PC-9 (cell line): ENCODE measurements at regions of chr10 and their contacts with region 1.

Region 1: DNA sequence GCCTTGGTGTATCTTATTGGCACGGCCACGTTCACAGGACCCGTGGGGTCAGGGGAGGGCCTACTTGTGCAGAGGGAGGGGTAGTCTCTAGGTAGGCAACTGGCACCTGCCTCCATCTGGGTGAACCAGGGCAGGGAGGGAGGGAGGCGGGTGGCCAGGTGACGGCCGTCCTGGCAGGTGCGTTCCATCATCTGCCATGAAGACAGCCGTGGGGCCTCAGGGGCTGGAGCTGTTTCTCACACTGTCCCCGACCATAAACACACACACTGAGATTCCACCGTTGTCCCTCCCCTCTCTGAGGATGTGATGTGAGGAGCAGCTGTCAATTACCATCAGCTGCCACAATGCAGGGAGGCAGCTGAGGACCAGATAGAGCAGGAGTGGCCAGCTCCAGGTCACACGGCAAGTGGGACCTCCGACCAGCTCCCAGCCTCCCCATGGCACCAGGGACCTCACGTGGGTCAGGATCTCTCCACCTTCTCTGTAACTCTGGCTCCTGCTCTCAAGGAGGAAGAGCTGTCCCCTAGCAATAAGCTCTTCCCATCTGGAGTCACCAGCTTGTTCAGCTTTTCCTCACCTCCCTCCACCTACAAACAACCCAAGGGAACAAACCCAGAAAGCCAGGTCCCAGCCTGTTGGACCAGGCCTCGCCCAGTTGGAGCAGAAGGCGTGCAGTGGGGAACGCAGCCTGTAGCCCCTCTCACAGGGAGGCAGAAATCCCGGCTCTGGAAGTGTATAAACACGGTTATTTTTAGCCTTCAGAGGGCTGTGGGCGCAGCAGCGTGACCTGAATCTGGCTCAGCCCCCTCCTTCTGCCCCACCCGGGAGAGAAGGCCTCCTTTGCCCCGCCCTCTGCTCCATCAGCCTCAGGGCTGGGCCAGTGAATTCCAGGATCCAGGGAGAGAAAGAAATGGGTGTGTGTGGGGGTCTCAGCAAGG is 33.1 kb downstream of the ZMIZ1 start:
- DNase-seq: no peak
- H3K4me3 ChIP-seq: no peak overlapping the region
- H3K27ac ChIP-seq: no peak overlapping the region
- H3K4me1 ChIP-seq: no peaks in the 10 kb centered on the region; the same call in 1 of the 2 replicates
- H3K27me3 ChIP-seq: no peaks in the 10 kb centered on the region
- CTCF ChIP-seq: no peak

Region 2: DNA sequence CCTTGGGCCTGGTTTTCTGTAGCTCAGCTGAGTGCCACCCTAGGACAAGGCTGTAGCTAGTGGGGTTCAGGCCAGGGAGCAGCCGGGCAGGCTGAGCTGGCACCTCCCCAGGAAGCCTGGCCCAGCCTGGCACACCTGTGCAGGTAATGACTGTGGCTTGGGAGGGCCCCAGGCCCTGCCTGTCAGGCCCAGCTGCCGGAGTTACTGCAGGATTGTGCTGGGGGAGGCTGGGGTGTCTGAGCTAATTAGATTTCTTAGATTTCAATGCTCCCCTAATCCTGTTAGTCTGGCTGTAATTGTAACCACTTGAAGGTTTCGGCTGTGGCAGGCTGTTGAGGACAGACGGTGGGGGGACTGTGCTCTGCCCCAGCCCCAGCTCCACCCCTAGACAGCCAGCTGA is 27.1 kb before region 1 on chr10:
- CTCF ChIA-PET with region 1: no interaction called
- POLR2A ChIA-PET with region 1: interaction called, 22 read pairs
- intact Hi-C with region 1: no loop called
- DNase-seq: peak in 1 of 2 experiments; percentile 67
- H3K4me3 ChIP-seq: no peak overlapping the region
- H3K27ac ChIP-seq: no peak overlapping the region
- H3K4me1 ChIP-seq: peaks cover 82% of the 10 kb centered on the region
- H3K27me3 ChIP-seq: no peaks in the 10 kb centered on the region
- CTCF ChIP-seq: no peak

Region 3: GRCh38 chr10:79202188-79203013 is 100.6 kb after region 1 on chr10:
- CTCF ChIA-PET with region 1: interaction called, 16 read pairs
- POLR2A ChIA-PET with region 1: no interaction called
- intact Hi-C with region 1: no loop called
- DNase-seq: peak in 1 of 2 experiments; percentile 51
- H3K4me3 ChIP-seq: no peak overlapping the region
- H3K27ac ChIP-seq: no peak overlapping the region
- H3K4me1 ChIP-seq: no peaks in the 10 kb centered on the region
- H3K27me3 ChIP-seq: no peaks in the 10 kb centered on the region
- CTCF ChIP-seq: peak; percentile 70

Region 4: DNA sequence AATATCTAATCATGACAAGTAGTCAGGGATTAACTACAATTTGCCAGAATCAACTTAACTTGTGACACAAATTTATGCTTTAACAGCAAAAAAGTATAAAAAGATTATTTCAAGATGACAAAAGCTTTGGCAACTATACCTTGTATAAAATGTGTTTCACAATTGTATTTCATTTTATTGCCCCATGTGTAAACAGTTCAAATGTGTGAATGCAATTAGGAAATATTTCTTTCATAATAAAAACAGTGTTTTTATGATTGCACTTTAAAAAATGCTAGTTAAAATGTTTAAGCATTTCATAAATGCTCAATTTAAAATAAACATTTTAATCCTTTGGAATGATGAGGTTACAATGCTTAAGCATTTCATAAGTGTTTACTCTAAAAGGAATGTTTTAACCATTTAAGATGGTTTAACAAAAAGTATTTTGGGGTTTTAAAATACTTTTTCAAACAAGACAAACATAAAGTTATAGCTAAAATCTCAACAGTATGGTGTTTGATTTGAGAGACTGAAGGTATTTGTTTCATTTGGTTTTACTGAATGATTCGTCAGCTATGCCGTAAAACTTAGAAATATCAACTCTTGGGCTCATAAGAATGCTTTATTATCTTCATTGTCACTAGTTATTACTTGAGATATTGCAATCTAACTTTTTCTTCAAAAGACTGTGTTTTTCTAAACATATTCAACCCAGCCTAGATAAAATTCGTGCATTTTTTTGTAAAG is 796.9 kb after region 1 on chr10:
- CTCF ChIA-PET with region 1: no interaction called
- POLR2A ChIA-PET with region 1: no interaction called
- intact Hi-C with region 1: no loop called
- DNase-seq: peak in 1 of 2 experiments; percentile 51
- H3K4me3 ChIP-seq: no peak overlapping the region
- H3K27ac ChIP-seq: no peak overlapping the region
- H3K4me1 ChIP-seq: peaks cover 11% of the 10 kb centered on the region
- H3K27me3 ChIP-seq: no peaks in the 10 kb centered on the region
- CTCF ChIP-seq: no peak